CD8-positive, alpha-beta T cell (primary cell): ENCODE measurements at regions of chr7 and their contacts with region 1.

Region 1: GRCh38 chr7:25894902-25895791 is 256.9 kb upstream of the NFE2L3 start:
- DNase-seq: peak; percentile 41 to 80 (median 63)
- ATAC-seq: peak; percentile 41
- H3K4me3 ChIP-seq: peak overlapping the region in 1 of 2 experiments; percentile 12
- H3K4me3 Mint-ChIP-seq: peak overlapping the region; percentile 35
- H3K27ac ChIP-seq: no peak overlapping the region
- H3K27ac Mint-ChIP-seq: no peak overlapping the region
- H3K4me1 ChIP-seq: peaks cover 14% of the 10 kb centered on the region
- H3K4me1 Mint-ChIP-seq: peaks cover 21% of the 10 kb centered on the region
- H3K27me3 ChIP-seq: no peaks in the 10 kb centered on the region
- H3K27me3 Mint-ChIP-seq: peaks cover under 1% of the 10 kb centered on the region
- CTCF ChIP-seq: peak; percentile 45

Region 2: GRCh38 chr7:25752967-25753791 is 142.0 kb before region 1 on chr7:
- CTCF ChIA-PET with region 1: no interaction called
- POLR2A ChIA-PET with region 1: no interaction called
- intact Hi-C with region 1: no loop called
- DNase-seq: no peak
- ATAC-seq: no peak
- H3K4me3 ChIP-seq: no peak overlapping the region
- H3K4me3 Mint-ChIP-seq: no peak overlapping the region
- H3K27ac ChIP-seq: no peak overlapping the region
- H3K27ac Mint-ChIP-seq: no peak overlapping the region
- H3K4me1 ChIP-seq: no peaks in the 10 kb centered on the region
- H3K4me1 Mint-ChIP-seq: no peaks in the 10 kb centered on the region
- H3K27me3 ChIP-seq: no peaks in the 10 kb centered on the region
- H3K27me3 Mint-ChIP-seq: peaks cover 7% of the 10 kb centered on the region
- CTCF ChIP-seq: no peak

Region 3: GRCh38 chr7:25908154-25908949 is 13.2 kb after region 1 on chr7:
- CTCF ChIA-PET with region 1: interaction called, 64 read pairs
- POLR2A ChIA-PET with region 1: no interaction called
- intact Hi-C with region 1: no loop called
- DNase-seq: no peak
- ATAC-seq: no peak
- H3K4me3 ChIP-seq: no peak overlapping the region
- H3K4me3 Mint-ChIP-seq: no peak overlapping the region
- H3K27ac ChIP-seq: no peak overlapping the region
- H3K27ac Mint-ChIP-seq: no peak overlapping the region
- H3K4me1 ChIP-seq: no peaks in the 10 kb centered on the region
- H3K4me1 Mint-ChIP-seq: no peaks in the 10 kb centered on the region
- H3K27me3 ChIP-seq: no peaks in the 10 kb centered on the region
- H3K27me3 Mint-ChIP-seq: peaks cover 2% of the 10 kb centered on the region
- CTCF ChIP-seq: no peak

Region 4: GRCh38 chr7:26061688-26062150 is 166.6 kb after region 1 on chr7:
- CTCF ChIA-PET with region 1: interaction called, 104 read pairs
- POLR2A ChIA-PET with region 1: interaction called, 3 read pairs
- intact Hi-C with region 1: loop called (anchors 1 kb)
- DNase-seq: peak; percentile 30 to 81 (median 73)
- ATAC-seq: peak; percentile 85
- H3K4me3 ChIP-seq: no peak overlapping the region
- H3K4me3 Mint-ChIP-seq: no peak overlapping the region
- H3K27ac ChIP-seq: no peak overlapping the region
- H3K27ac Mint-ChIP-seq: no peak overlapping the region
- H3K4me1 ChIP-seq: no peaks in the 10 kb centered on the region
- H3K4me1 Mint-ChIP-seq: no peaks in the 10 kb centered on the region
- H3K27me3 ChIP-seq: no peaks in the 10 kb centered on the region
- H3K27me3 Mint-ChIP-seq: peaks cover 20% of the 10 kb centered on the region
- CTCF ChIP-seq: peak; percentile 91

Region 5: GRCh38 chr7:26284995-26285632 is 390.0 kb after region 1 on chr7:
- CTCF ChIA-PET with region 1: interaction called, 10 read pairs
- POLR2A ChIA-PET with region 1: no interaction called
- intact Hi-C with region 1: loop called (anchors 1 to 5 kb)
- DNase-seq: peak in 2 of 9 experiments; percentile 35 to 53
- ATAC-seq: peak; percentile 95
- H3K4me3 ChIP-seq: no peak overlapping the region
- H3K4me3 Mint-ChIP-seq: no peak overlapping the region
- H3K27ac ChIP-seq: no peak overlapping the region
- H3K27ac Mint-ChIP-seq: no peak overlapping the region
- H3K4me1 ChIP-seq: no peaks in the 10 kb centered on the region
- H3K4me1 Mint-ChIP-seq: no peaks in the 10 kb centered on the region
- H3K27me3 ChIP-seq: no peaks in the 10 kb centered on the region
- H3K27me3 Mint-ChIP-seq: no peaks in the 10 kb centered on the region
- CTCF ChIP-seq: peak; percentile 38

Region 6: GRCh38 chr7:26667500-26668133 is 772.5 kb after region 1 on chr7:
- CTCF ChIA-PET with region 1: interaction called, 7 read pairs
- POLR2A ChIA-PET with region 1: no interaction called
- intact Hi-C with region 1: loop called (anchors 1 to 5 kb)
- DNase-seq: peak; percentile 4 to 82 (median 46)
- ATAC-seq: peak; percentile 70
- H3K4me3 ChIP-seq: no peak overlapping the region
- H3K4me3 Mint-ChIP-seq: no peak overlapping the region
- H3K27ac ChIP-seq: no peak overlapping the region
- H3K27ac Mint-ChIP-seq: no peak overlapping the region
- H3K4me1 ChIP-seq: no peaks in the 10 kb centered on the region
- H3K4me1 Mint-ChIP-seq: peaks cover 20% of the 10 kb centered on the region
- H3K27me3 ChIP-seq: no peaks in the 10 kb centered on the region
- H3K27me3 Mint-ChIP-seq: peaks cover 12% of the 10 kb centered on the region
- CTCF ChIP-seq: peak; percentile 70

Region 7: GRCh38 chr7:27160546-27161213 is 1265.5 kb after region 1 on chr7:
- CTCF ChIA-PET with region 1: interaction called, 10 read pairs
- POLR2A ChIA-PET with region 1: no interaction called
- intact Hi-C with region 1: loop called in 1 of 2 experiments (anchors 2 kb)
- DNase-seq: peak; percentile 70 to 93 (median 87)
- ATAC-seq: peak; percentile 87
- H3K4me3 ChIP-seq: peak overlapping the region; percentile 63 to 79
- H3K4me3 Mint-ChIP-seq: peak overlapping the region; percentile 80
- H3K27ac ChIP-seq: no peak overlapping the region
- H3K27ac Mint-ChIP-seq: no peak overlapping the region
- H3K4me1 ChIP-seq: peaks cover 31% of the 10 kb centered on the region
- H3K4me1 Mint-ChIP-seq: peaks cover 41% of the 10 kb centered on the region
- H3K27me3 ChIP-seq: peaks cover 52 to 70% of the 10 kb centered on the region in 2 experiments
- H3K27me3 Mint-ChIP-seq: peaks cover 77% of the 10 kb centered on the region
- CTCF ChIP-seq: peak; percentile 97